ENCODE measurements at regions of chr16 and their contacts with region 1.

Region 1: GRCh38 chr16:30445408-30446202 is at the start of gene SEPHS2:
- DNase-seq: peak; percentile 98
- ATAC-seq: peak; percentile 98
- H3K4me3 Mint-ChIP-seq: peak within 1 kb of the TSS; percentile 86
- H3K27ac Mint-ChIP-seq: peak within 1 kb of the TSS; percentile 93
- H3K4me1 Mint-ChIP-seq: peaks cover 35% of the 10 kb centered on the region
- H3K27me3 Mint-ChIP-seq: no peaks in the 10 kb centered on the region
- total RNA-seq, gene SEPHS2: 37.8 to 56.0 TPM

Region 2: GRCh38 chr16:30104494-30104968 is 341.1 kb before region 1 on chr16:
- CTCF ChIA-PET with region 1: no interaction called
- POLR2A ChIA-PET with region 1: no interaction called
- intact Hi-C with region 1: no loop called
- DNase-seq: no peak
- ATAC-seq: no peak
- H3K4me3 Mint-ChIP-seq: no peak overlapping the region
- H3K27ac Mint-ChIP-seq: peak overlapping the region; percentile 72
- H3K4me1 Mint-ChIP-seq: no peaks in the 10 kb centered on the region
- H3K27me3 Mint-ChIP-seq: no peaks in the 10 kb centered on the region

Region 3: GRCh38 chr16:30458561-30459394 is 13.2 kb after region 1 on chr16:
- CTCF ChIA-PET with region 1: interaction called, 21 read pairs
- POLR2A ChIA-PET with region 1: no interaction called
- intact Hi-C with region 1: no loop called
- DNase-seq: peak; percentile 94
- ATAC-seq: peak; percentile 96
- H3K4me3 Mint-ChIP-seq: peak overlapping the region; percentile 57
- H3K27ac Mint-ChIP-seq: peak overlapping the region; percentile 95
- H3K4me1 Mint-ChIP-seq: peaks cover 59% of the 10 kb centered on the region
- H3K27me3 Mint-ChIP-seq: no peaks in the 10 kb centered on the region

Region 4: DNA sequence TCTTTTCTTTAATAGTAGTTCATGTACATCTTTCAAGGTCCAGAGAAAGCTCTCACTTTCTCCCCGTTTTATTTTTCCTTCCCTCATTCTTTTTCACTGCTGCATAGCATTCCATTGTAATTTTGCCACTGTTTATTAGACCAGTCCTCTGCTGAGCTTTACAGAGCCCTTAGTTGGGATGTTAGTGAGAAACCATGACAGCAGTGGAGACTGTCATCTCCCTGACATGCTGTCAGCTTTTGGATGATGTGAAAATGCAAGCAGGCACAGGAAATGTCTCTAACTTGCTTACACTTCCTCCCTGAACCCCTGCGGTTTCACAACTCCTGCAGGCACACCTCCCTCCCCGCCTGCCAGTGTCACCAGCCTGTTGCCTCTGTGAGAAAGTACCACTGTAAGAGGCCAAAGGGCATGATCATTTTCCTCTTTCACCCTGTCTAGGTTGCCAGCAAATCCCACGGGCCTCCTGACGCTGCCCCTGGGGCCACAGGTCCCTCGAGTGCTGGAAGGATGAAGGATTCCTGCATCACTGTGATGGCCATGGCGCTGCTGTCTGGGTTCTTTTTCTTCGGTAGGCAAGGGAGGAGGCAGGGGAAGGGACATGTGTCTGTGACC is 26.8 kb after region 1 on chr16 and contains the start of gene ITGAL:
- CTCF ChIA-PET with region 1: interaction called, 27 read pairs
- POLR2A ChIA-PET with region 1: interaction called, 6 read pairs
- intact Hi-C with region 1: loop called (anchors 1 kb)
- DNase-seq: peak; percentile 93
- ATAC-seq: peak; percentile 62
- H3K4me3 Mint-ChIP-seq: peak within 1 kb of the TSS; percentile 95
- H3K27ac Mint-ChIP-seq: peak within 1 kb of the TSS; percentile 99
- H3K4me1 Mint-ChIP-seq: peaks cover 63% of the 10 kb centered on the region
- H3K27me3 Mint-ChIP-seq: no peaks in the 10 kb centered on the region
- total RNA-seq, gene ITGAL: 210 to 222 TPM

Region 5: DNA sequence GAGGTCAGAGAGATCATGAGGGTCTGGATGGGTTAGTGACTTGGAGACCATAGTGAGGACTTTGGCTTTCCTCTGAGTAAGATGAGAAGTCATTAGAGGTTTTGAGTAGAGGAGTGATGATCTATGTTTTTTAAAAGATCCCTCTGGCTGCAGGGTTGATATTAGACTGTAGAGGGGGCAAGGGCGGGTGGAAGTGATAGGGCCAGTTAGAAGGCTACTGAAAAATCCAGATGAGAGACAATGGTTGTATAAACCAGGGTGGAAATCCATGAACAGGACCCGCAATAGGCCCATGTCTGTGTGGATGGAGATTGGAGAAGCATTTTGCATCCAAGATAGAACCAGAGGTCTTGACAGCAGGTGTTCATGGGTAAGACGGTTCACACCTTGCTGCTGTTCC is 36.8 kb after region 1 on chr16:
- CTCF ChIA-PET with region 1: interaction called, 26 read pairs
- POLR2A ChIA-PET with region 1: interaction called, 6 read pairs
- intact Hi-C with region 1: no loop called
- DNase-seq: no peak
- ATAC-seq: peak; percentile 57
- H3K4me3 Mint-ChIP-seq: no peak overlapping the region
- H3K27ac Mint-ChIP-seq: peak overlapping the region; percentile 35
- H3K4me1 Mint-ChIP-seq: peaks cover 41% of the 10 kb centered on the region
- H3K27me3 Mint-ChIP-seq: no peaks in the 10 kb centered on the region

Region 6: DNA sequence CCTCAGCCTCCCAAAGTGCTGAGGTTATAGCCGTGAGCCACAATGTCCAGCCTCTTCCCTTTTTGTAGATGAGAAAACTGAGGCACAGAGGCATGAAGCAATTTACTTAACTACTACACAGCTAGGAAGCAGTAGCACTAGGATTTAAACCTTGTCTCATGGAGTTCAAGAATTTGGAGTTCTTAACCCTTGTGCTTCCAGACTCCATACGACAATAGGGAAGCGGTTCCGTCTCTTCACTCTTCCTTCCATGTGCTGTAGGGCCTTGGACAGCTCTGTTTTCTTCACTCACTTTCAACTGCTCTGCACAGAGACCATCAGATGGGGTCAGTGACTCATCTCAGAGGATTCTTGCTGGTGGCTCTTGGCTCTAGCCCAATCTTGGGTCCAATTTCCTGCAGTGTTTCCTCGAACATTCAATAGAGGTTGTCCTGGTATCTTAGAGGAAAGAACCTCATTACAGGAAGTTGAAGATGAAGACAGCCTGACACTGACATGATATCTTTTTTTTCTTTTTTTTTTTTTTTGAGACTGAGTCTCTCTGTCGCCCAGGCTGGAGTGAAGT is 46.2 kb after region 1 on chr16:
- CTCF ChIA-PET with region 1: no interaction called
- POLR2A ChIA-PET with region 1: no interaction called
- intact Hi-C with region 1: loop called (anchors 1 to 5 kb)
- DNase-seq: peak; percentile 24
- ATAC-seq: peak; percentile 65
- H3K4me3 Mint-ChIP-seq: no peak overlapping the region
- H3K27ac Mint-ChIP-seq: peak overlapping the region; percentile 66
- H3K4me1 Mint-ChIP-seq: peaks cover 25% of the 10 kb centered on the region
- H3K27me3 Mint-ChIP-seq: no peaks in the 10 kb centered on the region

Region 7: DNA sequence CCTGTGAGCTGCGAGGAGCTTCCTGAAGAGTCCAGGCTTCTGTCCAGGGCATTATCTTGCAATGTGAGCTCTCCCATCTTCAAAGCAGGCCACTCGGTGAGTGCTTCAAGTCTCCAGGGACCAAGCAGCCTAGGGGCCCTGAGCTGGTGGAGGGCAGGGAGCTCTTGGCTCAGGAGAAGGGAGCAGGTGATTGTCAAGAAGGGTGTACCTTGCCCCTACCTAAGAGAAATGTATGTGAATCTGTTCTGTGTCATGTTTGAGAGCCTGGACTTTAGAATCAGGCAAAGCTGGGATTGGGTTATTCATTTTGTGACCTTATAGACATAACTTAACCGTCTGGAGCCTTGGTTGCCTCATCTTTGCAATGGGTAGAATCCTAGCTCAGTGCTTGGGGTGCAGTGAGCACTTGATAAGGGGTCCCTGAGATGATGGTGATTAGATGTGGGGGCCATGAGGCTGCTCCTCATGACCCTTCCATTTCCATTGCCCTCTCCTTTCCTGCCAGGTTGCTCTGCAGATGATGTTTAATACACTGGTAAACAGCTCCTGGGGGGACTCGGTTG is 64.9 kb after region 1 on chr16:
- CTCF ChIA-PET with region 1: interaction called, 10 read pairs
- POLR2A ChIA-PET with region 1: no interaction called
- intact Hi-C with region 1: no loop called
- DNase-seq: no peak
- ATAC-seq: no peak
- H3K4me3 Mint-ChIP-seq: no peak overlapping the region
- H3K27ac Mint-ChIP-seq: no peak overlapping the region
- H3K4me1 Mint-ChIP-seq: no peaks in the 10 kb centered on the region
- H3K27me3 Mint-ChIP-seq: no peaks in the 10 kb centered on the region

Measured in activated CD4-positive, alpha-beta T cell treated with anti-CD3 and anti-CD28 coated beads for 36 hours (primary cell).